Psoas muscle (tissue), 8 donors: ENCODE measurements at regions of chr11 and their contacts with region 1.

Region 1: DNA sequence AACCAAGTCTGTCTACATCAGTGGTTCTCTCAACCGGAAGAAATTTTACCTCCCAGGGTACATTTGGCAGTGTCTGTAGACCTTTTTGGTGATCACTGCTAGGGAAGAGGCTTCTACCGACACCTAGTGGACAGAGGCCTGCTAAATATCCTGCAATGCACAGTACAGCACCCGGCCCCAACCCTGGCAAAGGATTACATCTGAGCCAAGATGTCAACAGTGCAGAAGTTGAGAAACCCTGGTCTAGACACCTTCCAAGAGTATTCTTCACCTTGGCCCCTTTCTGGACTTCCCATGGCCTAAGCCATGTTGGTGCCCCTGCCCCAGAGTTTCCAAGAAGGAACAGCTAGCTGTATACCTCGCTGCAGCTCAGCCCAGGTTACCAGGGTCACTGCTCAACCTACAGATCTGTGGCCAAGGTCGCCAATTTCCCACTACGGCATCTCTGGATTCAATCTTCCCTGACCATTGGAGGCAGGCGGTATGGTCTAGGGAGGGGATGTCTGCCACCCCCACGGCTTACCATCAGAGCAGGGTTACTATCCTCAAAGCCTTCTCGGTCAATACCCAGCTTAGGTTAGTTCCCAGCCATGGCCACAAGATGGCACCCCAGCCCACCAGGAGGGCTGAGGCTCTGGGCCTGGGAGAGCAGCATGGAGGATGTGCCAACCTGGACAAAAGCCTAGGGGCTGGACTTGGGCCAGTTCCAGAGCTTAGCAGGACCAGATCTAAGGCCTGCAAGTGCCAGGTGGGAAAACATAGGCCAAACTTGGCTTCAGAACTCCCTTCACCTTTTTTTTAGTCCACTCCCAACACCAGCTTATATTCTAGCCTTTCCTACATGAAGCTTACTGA is 3.7 kb upstream of the KCNC1 start:
- DNase-seq: peak; percentile 82 to 94
- ATAC-seq: peak; percentile 87 to 93 (median 90)
- H3K4me3 ChIP-seq: no peak overlapping the region
- H3K27ac ChIP-seq: no peak overlapping the region
- H3K4me1 ChIP-seq: peaks cover 18% of the 10 kb centered on the region
- H3K27me3 ChIP-seq: peaks cover 0 to 6% (median 2%) of the 10 kb centered on the region in 3 donors
- CTCF ChIP-seq: peak; percentile 82

Region 2: DNA sequence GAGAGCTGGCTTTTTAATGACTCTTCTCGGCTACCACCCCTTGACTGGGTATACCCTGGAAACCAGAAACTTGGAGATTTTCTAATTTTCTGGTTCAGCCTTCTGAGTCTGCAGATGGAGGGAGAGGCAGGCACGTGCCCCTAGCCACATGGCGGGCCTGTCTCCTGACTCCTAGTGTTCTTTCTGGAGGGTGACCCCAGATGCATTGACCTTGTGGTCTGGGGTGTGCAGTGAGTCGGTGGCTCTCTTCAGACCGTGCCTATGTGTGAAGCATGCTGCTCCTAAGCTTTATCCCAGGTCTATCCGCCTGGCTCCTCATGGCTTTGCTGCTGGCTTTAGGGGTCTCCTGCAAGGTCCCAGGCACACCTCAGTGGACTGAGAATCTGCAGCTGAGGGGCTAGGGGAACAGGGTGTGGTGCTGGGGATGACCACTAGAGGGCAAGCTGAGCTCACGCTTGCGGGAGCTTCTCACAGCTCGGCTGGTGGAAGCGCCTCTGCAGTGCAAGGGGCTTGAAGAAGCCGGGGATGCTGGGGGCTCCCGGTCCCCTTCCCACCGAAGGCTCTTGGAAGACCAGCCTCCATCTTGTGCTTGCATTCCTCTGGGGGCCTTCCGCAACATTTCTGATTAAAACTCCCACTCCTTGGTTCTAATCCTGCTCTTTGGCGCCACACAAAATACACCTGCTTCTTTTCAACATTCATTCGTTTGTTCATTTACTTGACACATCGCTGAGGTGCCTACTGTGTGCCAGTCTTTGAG is 132.0 kb before region 1 on chr11:
- intact Hi-C with region 1: loop called in 1 of 2 experiments (anchors 2 kb)
- DNase-seq: peak; percentile 74 to 87
- ATAC-seq: peak; percentile 88 to 96 (median 94)
- H3K4me3 ChIP-seq: no peak overlapping the region
- H3K27ac ChIP-seq: no peak overlapping the region
- H3K4me1 ChIP-seq: no peaks in the 10 kb centered on the region
- H3K27me3 ChIP-seq: no peaks in the 10 kb centered on the region
- CTCF ChIP-seq: peak; percentile 98

Region 3: GRCh38 chr11:17673951-17674350 is 56.9 kb before region 1 on chr11:
- intact Hi-C with region 1: no loop called
- DNase-seq: no peak
- ATAC-seq: peak; percentile 61 to 80 (median 62)
- H3K4me3 ChIP-seq: no peak overlapping the region
- H3K27ac ChIP-seq: no peak overlapping the region
- H3K4me1 ChIP-seq: no peaks in the 10 kb centered on the region
- H3K27me3 ChIP-seq: no peaks in the 10 kb centered on the region
- CTCF ChIP-seq: no peak

Region 4: DNA sequence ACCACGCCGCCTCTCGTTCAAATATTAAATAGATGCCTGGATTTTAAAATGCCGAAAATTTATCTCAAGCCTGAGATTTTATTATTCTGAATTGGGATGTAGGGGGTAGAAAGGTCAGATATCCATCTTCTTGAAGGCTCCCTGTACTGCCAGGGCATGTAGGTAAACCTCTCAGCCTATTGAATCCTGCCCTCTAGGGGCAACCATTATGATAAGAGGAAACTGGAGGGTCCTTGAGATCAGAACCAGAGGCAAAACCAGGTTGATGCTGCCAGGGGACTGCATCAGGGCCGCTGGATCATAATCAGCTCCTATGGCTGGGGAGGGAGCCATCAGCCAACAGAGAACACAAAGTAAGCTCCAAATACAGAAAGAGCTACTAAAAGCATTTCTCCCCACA is 96.2 kb after region 1 on chr11:
- intact Hi-C with region 1: loop called in 1 of 2 experiments (anchors 5 kb)
- DNase-seq: no peak
- ATAC-seq: no peak
- H3K4me3 ChIP-seq: no peak overlapping the region
- H3K27ac ChIP-seq: no peak overlapping the region
- H3K4me1 ChIP-seq: peaks cover 28% of the 10 kb centered on the region
- H3K27me3 ChIP-seq: no peaks in the 10 kb centered on the region
- CTCF ChIP-seq: no peak

Region 5: DNA sequence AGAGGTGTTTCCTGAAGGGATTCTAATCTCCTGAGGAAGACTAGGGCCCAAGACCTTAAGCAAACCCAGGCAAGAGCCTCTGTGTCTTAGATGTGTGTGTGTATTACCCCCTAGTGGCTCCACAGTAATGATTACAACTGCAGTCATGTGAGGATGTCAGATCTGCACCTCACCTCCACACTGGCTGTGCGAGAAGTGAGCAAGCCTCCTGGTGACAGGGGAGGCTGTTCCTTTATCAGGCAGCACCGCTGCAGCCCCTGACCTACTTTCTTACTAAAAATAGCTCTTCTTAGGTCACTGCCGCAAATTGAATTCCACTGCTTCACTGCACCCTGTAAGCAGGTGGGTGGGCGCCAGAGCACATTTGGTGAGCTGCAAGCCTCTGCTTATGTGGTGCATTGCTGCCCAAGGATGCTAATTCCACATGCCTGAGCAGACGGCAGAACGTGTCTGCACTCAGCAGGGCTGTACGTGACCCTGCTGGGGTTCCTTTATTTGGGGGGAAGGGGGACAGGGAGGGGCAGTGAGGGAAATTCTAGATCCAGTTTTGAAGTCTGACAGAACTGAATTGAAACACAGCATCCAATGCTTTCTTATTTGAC is 116.1 kb after region 1 on chr11:
- intact Hi-C with region 1: loop called (anchors 2 kb)
- DNase-seq: peak; percentile 29 to 67
- ATAC-seq: peak; percentile 84 to 91 (median 90)
- H3K4me3 ChIP-seq: no peak overlapping the region
- H3K27ac ChIP-seq: peak overlapping the region; percentile 47
- H3K4me1 ChIP-seq: peaks cover 36% of the 10 kb centered on the region
- H3K27me3 ChIP-seq: no peaks in the 10 kb centered on the region
- CTCF ChIP-seq: peak; percentile 56

Region 6: DNA sequence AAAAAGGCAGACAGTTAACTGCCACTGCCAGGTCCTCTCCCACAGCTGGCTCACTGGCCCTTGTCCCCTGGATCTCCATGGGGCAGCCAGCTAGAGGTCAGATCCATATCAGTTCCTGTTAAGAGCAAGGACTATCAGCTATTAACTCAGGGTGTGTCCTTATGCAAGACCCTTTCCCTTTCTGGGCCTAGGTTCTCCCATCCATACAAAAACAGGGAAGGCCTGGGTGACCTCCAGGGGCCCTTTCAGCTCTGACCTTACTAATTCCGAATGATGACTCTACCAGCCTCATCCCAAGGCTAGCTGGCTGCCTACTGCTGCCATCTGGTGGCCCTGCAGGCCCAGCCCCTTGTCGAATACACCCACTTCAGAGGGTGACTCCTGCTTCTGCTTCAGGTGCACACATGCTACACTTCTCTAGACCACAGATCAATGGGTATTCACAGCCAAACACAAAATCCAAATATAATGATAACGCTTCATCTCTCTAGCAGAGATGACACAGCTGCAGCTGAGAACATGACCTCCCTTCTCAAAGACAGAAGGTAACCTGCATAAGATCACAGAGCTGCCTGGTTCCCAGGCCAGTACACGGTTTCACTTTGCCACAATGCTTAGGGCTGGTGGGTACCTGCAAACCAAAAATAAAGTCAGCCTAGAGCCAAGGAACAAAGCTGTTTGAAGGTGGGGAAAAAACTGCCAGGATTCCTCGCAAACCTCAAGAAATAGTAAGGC is 247.9 kb after region 1 on chr11:
- intact Hi-C with region 1: loop called (anchors 1 to 2 kb)
- DNase-seq: peak; percentile 54 to 78
- ATAC-seq: peak; percentile 92 to 97 (median 94)
- H3K4me3 ChIP-seq: no peak overlapping the region
- H3K27ac ChIP-seq: no peak overlapping the region
- H3K4me1 ChIP-seq: peaks cover 5% of the 10 kb centered on the region
- H3K27me3 ChIP-seq: no peaks in the 10 kb centered on the region
- CTCF ChIP-seq: peak; percentile 79